GM12878 (cell line): ENCODE measurements at regions of chr10 and their contacts with region 1.

Region 1: DNA sequence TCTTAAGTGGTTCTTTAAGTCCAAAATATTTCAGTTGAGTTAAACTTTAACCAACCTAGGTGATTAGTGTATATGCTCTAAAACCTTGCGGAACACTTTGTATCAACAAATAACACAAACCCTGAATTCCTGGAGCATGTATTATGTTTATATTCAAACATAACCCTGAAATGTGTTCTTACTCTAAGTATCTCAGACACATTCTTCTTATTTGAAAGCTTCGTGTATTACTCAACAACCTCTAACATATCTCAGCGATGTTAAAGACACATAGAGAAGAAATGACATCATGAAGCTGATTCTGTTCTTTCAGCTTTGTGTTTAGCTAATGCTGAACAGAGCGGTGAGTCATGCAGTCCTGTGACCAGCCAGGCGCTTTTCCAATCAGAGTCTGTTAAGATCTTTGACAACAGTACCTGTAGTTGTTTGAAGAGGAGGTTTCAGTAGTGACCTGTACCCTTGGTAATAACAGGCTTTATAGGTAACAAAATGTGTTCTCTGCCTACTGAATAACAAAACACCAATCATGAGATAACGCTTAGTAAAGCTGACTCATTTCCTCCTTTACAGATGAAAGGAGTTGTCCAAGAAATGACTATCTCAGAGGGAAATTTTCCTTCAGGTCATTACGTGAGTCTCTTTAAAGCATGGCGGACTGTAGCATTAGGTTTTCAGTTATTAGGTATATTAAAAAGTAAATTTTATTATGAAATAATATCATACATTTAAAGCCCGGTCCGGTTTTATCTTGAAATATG is 67.3 kb upstream of the KLF6 start:
- DNase-seq: peak; percentile 88
- ATAC-seq: peak; percentile 95
- H3K4me3 ChIP-seq: peak overlapping the region; percentile 40
- H3K27ac ChIP-seq: peak overlapping the region; percentile 73
- H3K4me1 ChIP-seq: peaks cover 31% of the 10 kb centered on the region
- H3K27me3 ChIP-seq: no peaks in the 10 kb centered on the region
- CTCF ChIP-seq: no peak
- EP300 ChIP-seq: peak; percentile 99 to 100
- POLR2A ChIP-seq: no peak
- RAD21 ChIP-seq: peak; percentile 21

Region 2: DNA sequence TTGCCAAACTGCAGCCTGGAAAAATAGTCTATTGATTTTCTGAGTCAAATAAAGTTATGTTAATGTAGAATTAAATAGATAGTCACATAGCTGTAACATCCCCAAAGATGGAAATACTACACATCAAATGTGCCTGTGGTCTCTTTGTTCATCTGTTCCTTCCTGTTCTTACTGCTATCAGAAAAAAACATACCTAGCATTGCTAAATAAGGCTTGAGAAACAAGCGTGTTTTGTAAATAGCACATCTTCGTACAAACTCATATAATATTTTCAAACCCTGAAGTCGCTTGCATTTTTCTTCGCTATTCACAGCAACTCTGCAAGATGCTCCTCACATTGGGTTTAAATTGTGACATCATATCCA is 183.4 kb before region 1 on chr10:
- CTCF ChIA-PET with region 1: no interaction called
- POLR2A ChIA-PET with region 1: no interaction called
- RAD21 ChIA-PET with region 1: no interaction called
- SMC1A ChIA-PET with region 1: no interaction called
- in situ Hi-C with region 1: no loop called
- intact Hi-C with region 1: no loop called
- DNase-seq: no peak
- ATAC-seq: no peak
- H3K4me3 ChIP-seq: no peak overlapping the region
- H3K27ac ChIP-seq: no peak overlapping the region
- H3K4me1 ChIP-seq: no peaks in the 10 kb centered on the region
- H3K27me3 ChIP-seq: no peaks in the 10 kb centered on the region; a peak in 2 of 4 replicates
- CTCF ChIP-seq: no peak
- EP300 ChIP-seq: no peak
- POLR2A ChIP-seq: no peak
- RAD21 ChIP-seq: no peak

Region 3: DNA sequence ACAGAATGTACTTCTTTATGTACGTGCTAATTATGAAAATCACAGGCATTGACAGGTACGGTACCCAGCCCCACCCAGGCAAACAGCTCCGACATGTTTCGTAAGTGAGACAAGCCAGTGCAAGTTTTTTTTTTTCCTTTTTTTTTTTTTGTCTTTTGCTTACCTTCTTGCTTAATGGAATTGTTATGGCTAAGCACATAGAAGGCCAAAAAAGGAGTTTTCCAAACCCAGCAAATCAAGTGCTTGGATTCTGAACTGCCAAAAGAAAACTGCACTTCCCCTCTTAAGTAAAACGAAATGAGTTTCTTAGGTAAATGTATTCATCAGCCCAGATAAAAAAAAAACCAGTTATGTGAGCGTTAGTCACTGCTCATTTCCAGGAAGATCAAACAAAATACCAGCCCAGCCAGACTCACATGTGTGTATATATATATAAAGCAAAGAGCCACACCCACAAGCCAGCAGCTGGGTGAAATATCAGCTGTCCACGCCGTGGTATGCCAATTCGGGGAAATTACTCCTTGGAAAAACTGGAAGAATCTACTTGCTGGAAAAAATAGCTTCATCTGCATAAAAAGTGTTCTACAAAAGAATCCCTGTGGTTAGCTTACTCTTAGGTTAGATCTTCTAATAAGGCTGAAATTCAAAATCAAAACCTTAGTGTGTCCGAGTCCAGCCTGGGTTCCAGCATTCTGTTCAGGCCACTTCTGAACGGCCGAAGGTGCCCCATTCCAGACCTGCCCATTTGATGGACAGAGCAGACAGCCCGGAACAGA is 75.3 kb before region 1 on chr10:
- CTCF ChIA-PET with region 1: interaction called, 18 read pairs
- POLR2A ChIA-PET with region 1: interaction called, 3 read pairs
- RAD21 ChIA-PET with region 1: interaction called, 98 read pairs
- SMC1A ChIA-PET with region 1: interaction called, 73 read pairs
- in situ Hi-C with region 1: no loop called
- intact Hi-C with region 1: no loop called
- DNase-seq: no peak
- ATAC-seq: no peak
- H3K4me3 ChIP-seq: no peak overlapping the region
- H3K27ac ChIP-seq: no peak overlapping the region
- H3K4me1 ChIP-seq: peaks cover 10% of the 10 kb centered on the region
- H3K27me3 ChIP-seq: no peaks in the 10 kb centered on the region
- CTCF ChIP-seq: no peak
- EP300 ChIP-seq: no peak
- POLR2A ChIP-seq: no peak; the same call in 1 of the 2 replicates
- RAD21 ChIP-seq: no peak

Region 4: DNA sequence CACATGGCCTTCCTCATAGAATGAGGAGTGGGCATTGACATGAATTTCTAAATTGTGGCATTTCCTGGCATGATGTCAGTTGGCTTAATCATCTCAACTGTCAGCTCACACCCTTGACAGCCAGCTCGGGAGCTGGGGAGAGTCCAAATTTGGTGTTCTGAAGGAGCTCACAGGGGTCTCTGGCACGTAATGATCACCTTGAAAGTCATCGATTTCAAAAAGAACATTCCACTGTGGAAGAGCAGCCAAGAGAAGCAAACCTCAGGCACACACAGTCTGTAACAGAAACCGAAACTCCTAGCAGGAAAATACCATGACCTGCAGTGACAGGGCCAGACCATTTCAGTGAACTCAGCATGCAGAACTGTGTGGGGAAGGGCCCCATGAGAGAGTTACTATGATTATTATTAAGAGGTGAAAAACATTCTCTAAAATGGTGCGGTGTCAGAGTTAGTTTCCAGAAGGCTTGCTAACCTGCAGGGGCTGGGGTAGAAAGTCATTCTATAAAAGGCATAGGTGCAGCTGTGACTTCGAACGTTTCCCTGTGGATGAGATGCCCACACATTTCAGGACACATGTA is 40.9 kb before region 1 on chr10:
- CTCF ChIA-PET with region 1: interaction called, 18 read pairs
- POLR2A ChIA-PET with region 1: interaction called, 28 read pairs
- RAD21 ChIA-PET with region 1: interaction called, 70 read pairs
- SMC1A ChIA-PET with region 1: interaction called, 83 read pairs
- in situ Hi-C with region 1: no loop called
- intact Hi-C with region 1: loop called (anchors 1 kb)
- DNase-seq: peak; percentile 76
- ATAC-seq: peak; percentile 87
- H3K4me3 ChIP-seq: peak overlapping the region; percentile 55; the same call in 1 of the 2 replicates
- H3K27ac ChIP-seq: peak overlapping the region; percentile 82
- H3K4me1 ChIP-seq: peaks cover 42% of the 10 kb centered on the region
- H3K27me3 ChIP-seq: no peaks in the 10 kb centered on the region
- CTCF ChIP-seq: no peak
- EP300 ChIP-seq: peak; percentile 62 to 69; a peak in 3 of 4 replicates
- POLR2A ChIP-seq: peak; percentile 24; the same call in 1 of the 2 replicates
- RAD21 ChIP-seq: peak; percentile 26; the same call in 1 of the 2 replicates

Region 5: GRCh38 chr10:3835770-3836169 is 16.6 kb before region 1 on chr10:
- CTCF ChIA-PET with region 1: interaction called, 8 read pairs
- POLR2A ChIA-PET with region 1: interaction called, 26 read pairs
- RAD21 ChIA-PET with region 1: interaction called, 135 read pairs
- SMC1A ChIA-PET with region 1: interaction called, 77 read pairs
- in situ Hi-C with region 1: no loop called
- intact Hi-C with region 1: loop called (anchors 2 kb)
- DNase-seq: no peak
- ATAC-seq: peak; percentile 75
- H3K4me3 ChIP-seq: peak overlapping the region; percentile 46
- H3K27ac ChIP-seq: peak overlapping the region; percentile 88
- H3K4me1 ChIP-seq: peaks cover 23% of the 10 kb centered on the region
- H3K27me3 ChIP-seq: no peaks in the 10 kb centered on the region
- CTCF ChIP-seq: no peak
- EP300 ChIP-seq: no peak; a peak in 1 of 4 replicates
- POLR2A ChIP-seq: no peak
- RAD21 ChIP-seq: no peak

Region 6: DNA sequence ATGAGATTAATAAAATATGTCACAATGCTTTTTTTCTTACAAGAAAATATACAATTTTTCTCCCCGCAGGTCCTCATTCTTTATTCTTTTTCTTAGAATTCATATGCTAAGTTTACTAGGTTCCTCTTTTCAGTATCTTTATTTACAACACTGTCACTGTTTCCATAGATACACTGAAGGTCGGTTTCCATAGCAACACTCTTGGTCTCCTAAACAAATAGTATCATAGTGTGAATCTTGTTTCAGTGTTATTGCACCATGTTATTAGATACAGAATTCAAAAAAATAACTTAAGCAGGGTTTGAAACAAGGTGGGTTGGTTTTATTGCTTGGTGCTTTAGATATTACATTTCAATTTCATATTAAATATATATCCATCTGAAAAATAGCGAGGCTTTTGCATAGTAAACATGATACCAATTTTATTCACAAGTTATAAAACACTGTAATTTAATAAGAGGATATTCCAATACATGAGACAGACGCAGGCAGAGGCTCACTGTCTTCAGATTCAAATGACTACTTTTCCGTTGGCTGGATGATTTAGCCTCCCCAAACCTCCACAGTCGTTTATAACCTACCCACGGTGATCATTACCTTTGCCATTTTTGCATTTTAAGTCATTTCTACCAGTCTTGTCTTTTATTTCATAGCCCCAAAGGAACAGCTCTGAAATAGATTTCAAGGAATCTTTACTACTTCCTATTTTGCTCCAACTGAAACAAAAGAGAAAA is 21.6 kb after region 1 on chr10:
- CTCF ChIA-PET with region 1: interaction called, 11 read pairs
- POLR2A ChIA-PET with region 1: interaction called, 51 read pairs
- RAD21 ChIA-PET with region 1: interaction called, 100 read pairs
- SMC1A ChIA-PET with region 1: interaction called, 295 read pairs
- in situ Hi-C with region 1: no loop called
- intact Hi-C with region 1: loop called (anchors 1 kb)
- DNase-seq: peak; percentile 83
- ATAC-seq: peak; percentile 50
- H3K4me3 ChIP-seq: no peak overlapping the region
- H3K27ac ChIP-seq: peak overlapping the region; percentile 90
- H3K4me1 ChIP-seq: peaks cover 50% of the 10 kb centered on the region
- H3K27me3 ChIP-seq: no peaks in the 10 kb centered on the region
- CTCF ChIP-seq: no peak
- EP300 ChIP-seq: peak; percentile 97 to 100
- POLR2A ChIP-seq: no peak
- RAD21 ChIP-seq: peak; percentile 16; the same call in 1 of the 2 replicates

Region 7: DNA sequence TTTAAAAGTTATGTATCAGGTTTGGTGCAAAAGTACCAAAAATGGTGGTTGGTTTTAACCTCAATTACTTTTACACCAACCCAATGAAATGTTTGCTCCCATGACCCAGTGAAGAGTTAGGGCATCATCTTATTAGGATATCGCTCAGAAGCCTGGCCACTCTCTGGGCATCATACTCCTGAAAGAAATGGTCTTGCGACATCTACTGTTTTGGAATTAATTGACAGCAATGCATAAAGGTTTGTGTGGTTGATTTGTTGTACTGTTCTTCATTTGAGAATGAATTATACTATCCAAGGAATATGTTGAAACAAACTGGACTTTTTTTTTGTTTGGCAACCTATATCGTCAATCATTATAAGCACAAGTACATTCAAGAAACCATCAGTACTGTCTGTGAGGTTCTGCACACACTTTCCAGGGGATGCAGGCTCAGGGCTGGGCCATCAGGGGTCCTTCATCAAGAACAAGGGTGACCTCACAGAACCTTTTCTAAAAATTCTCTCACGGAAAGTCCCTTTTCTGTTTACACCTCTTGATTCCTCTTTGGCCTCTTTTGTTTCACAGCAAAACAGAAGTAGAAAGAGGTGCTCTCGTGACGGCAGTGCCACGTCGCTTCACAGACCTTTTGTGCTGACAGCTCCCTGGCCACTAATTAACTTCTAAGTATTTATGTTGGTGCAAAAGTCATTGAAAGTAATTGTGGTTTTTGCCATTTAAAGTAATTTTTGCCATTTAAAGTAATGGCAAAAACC is 49.9 kb after region 1 on chr10:
- CTCF ChIA-PET with region 1: interaction called, 5 read pairs
- POLR2A ChIA-PET with region 1: interaction called, 3 read pairs
- RAD21 ChIA-PET with region 1: interaction called, 15 read pairs
- SMC1A ChIA-PET with region 1: interaction called, 11 read pairs
- in situ Hi-C with region 1: no loop called
- intact Hi-C with region 1: loop called (anchors 1 kb)
- DNase-seq: peak; percentile 93
- ATAC-seq: peak; percentile 95
- H3K4me3 ChIP-seq: no peak overlapping the region; the same call in 1 of the 2 replicates
- H3K27ac ChIP-seq: peak overlapping the region; percentile 75
- H3K4me1 ChIP-seq: peaks cover 25% of the 10 kb centered on the region
- H3K27me3 ChIP-seq: no peaks in the 10 kb centered on the region
- CTCF ChIP-seq: peak; percentile 18 to 38 (median 25); a peak in 4 of 6 replicates
- EP300 ChIP-seq: peak; percentile 99; a peak in 3 of 4 replicates
- POLR2A ChIP-seq: no peak
- RAD21 ChIP-seq: peak; percentile 70